Dendritic cell treated with granulocyte-macrophage colony-stimulating factor and Interleukin-4, amounts not matched to agents 40 ng/mL and 50 ng/mL, for 4 days (primary cell): ENCODE measurements at regions of chr17 and their contacts with region 1.

Region 1: DNA sequence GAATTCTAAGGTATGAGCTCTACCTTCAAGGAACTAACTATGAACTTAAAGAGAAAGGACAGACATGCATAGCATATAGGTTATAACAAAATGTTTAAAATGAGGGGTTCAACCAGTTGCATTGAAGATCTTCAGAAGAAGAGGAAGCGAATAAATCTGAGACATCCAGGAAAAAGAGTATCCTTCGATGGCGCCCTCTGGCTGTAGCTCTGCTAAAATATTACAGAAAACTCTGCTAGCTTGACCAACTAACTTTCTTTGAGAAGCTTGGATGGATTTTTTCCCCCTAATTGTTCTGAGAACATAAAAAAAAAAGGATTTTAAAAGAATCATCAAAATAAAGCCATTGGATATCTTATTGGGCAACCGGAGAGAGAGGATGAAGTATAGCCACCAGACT is 659.9 kb upstream of the SOX9 start:
- H3K4me3 Mint-ChIP-seq: no peak overlapping the region
- H3K27ac Mint-ChIP-seq: no peak overlapping the region
- H3K4me1 Mint-ChIP-seq: no peaks in the 10 kb centered on the region
- H3K27me3 Mint-ChIP-seq: no peaks in the 10 kb centered on the region

Region 2: DNA sequence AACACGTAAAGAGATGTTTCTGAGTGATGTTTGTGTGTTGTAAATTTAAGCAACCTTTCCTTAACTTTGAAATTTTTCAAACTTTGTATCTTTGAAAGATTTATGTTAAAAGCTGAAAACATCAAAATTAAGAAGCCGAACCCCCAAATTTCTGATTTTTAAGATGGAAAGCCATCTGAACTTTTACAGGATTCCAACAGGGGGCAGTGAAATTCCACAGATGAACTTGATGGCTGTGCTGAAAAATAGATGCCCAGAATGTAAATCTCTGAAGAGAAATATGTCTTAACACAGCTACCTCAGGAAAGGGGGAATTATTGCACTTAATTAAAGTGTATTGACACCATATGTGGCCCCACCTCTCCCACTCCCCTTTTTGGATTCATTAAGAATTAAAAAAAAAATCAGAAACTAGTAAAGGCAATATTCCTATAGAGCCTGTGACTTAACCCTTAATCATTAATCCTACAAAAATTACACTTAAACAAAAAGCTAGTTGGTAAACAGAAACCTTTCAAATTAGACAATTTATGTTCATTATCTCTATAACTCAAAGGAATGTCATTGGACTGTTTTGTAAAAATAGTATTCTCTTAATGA is 693.7 kb before region 1 on chr17:
- intact Hi-C with region 1: loop called (anchors 5 kb)
- H3K4me3 Mint-ChIP-seq: no peak overlapping the region
- H3K27ac Mint-ChIP-seq: no peak overlapping the region
- H3K4me1 Mint-ChIP-seq: no peaks in the 10 kb centered on the region
- H3K27me3 Mint-ChIP-seq: no peaks in the 10 kb centered on the region

Region 3: GRCh38 chr17:71409712-71410111 is 51.2 kb before region 1 on chr17:
- intact Hi-C with region 1: loop called (anchors 10 kb)
- H3K4me3 Mint-ChIP-seq: no peak overlapping the region
- H3K27ac Mint-ChIP-seq: no peak overlapping the region
- H3K4me1 Mint-ChIP-seq: no peaks in the 10 kb centered on the region
- H3K27me3 Mint-ChIP-seq: no peaks in the 10 kb centered on the region

Region 4: GRCh38 chr17:71472809-71473789 is 12.2 kb after region 1 on chr17:
- intact Hi-C with region 1: no loop called
- H3K4me3 Mint-ChIP-seq: no peak overlapping the region
- H3K27ac Mint-ChIP-seq: no peak overlapping the region
- H3K4me1 Mint-ChIP-seq: no peaks in the 10 kb centered on the region
- H3K27me3 Mint-ChIP-seq: no peaks in the 10 kb centered on the region